Left ventricle myocardium inferior (tissue), 1 donor: ENCODE measurements at regions of chr2 and their contacts with region 1.

Region 1: DNA sequence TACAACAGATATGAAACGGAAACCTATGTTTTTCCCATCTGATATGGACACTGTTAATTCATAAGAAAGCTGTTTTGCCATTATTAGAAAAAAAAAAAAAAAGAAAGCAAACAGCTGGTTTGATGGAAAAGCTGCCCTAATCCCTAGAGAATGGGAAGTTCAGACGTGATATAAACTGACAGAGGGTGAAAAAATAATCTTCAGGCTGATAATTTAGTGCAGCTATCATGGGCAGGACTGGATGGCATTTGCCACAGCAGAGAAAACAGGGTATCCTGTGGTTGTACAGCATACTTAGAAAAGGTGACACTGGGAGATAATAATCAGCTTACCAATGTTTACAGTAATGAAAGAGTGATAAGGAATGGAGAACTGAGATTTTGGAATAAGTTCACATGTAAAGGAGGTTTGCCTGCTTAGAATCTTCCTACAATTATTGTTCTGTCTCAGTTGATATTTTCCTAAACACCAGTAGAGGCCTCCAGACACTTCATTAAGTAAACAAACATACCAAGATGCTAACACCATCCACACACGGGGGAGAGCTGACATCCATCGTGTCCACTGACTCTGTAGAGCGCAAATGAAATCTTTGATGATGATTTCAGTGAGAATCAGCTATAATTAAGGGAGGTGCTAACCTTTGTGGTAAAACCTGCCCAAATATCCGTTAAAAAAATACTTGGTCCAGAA is 211.6 kb upstream of the MMADHC start:
- DNase-seq: no peak
- H3K4me3 ChIP-seq: no peak overlapping the region
- H3K27ac ChIP-seq: no peak overlapping the region
- H3K4me1 ChIP-seq: no peaks in the 10 kb centered on the region
- H3K27me3 ChIP-seq: no peaks in the 10 kb centered on the region
- CTCF ChIP-seq: peak; percentile 59

Region 2: GRCh38 chr2:149857344-149857743 is 58.2 kb after region 1 on chr2:
- intact Hi-C with region 1: no loop called
- DNase-seq: no peak
- H3K4me3 ChIP-seq: no peak overlapping the region
- H3K27ac ChIP-seq: no peak overlapping the region
- H3K4me1 ChIP-seq: peaks cover 17% of the 10 kb centered on the region
- H3K27me3 ChIP-seq: no peaks in the 10 kb centered on the region
- CTCF ChIP-seq: no peak

Region 3: GRCh38 chr2:150487537-150488429 is 688.6 kb after region 1 on chr2 and contains the start of gene RND3:
- intact Hi-C with region 1: loop called (anchors 5 kb)
- DNase-seq: peak; percentile 95
- H3K4me3 ChIP-seq: peak within 1 kb of the TSS; percentile 84
- H3K27ac ChIP-seq: peak within 1 kb of the TSS; percentile 97
- H3K4me1 ChIP-seq: peaks cover 41% of the 10 kb centered on the region
- H3K27me3 ChIP-seq: no peaks in the 10 kb centered on the region
- CTCF ChIP-seq: peak; percentile 89
- total RNA-seq, gene RND3: 26.9 TPM